PC-3 (cell line): ENCODE measurements at regions of chrX and their contacts with region 1.

Region 1: GRCh38 chrX:141176586-141177451 is at the start of gene LDOC1:
- DNase-seq: peak; percentile 89
- ATAC-seq: peak; percentile 79
- H3K4me3 ChIP-seq: peak within 1 kb of the TSS; percentile 99
- H3K27ac ChIP-seq: peak within 1 kb of the TSS; percentile 40
- H3K4me1 ChIP-seq: peaks cover 14% of the 10 kb centered on the region; the same call in 1 of the 2 replicates
- H3K27me3 ChIP-seq: no peaks in the 10 kb centered on the region
- CTCF ChIP-seq: no peak
- total RNA-seq, gene LDOC1: 40.6 and 45.5 TPM in 2 replicates

Region 2: GRCh38 chrX:141320801-141321200 is 144.0 kb after region 1 on chrX:
- CTCF ChIA-PET with region 1: no interaction called
- POLR2A ChIA-PET with region 1: no interaction called
- intact Hi-C with region 1: loop called (anchors 10 kb)
- DNase-seq: peak; percentile 39
- ATAC-seq: no peak
- H3K4me3 ChIP-seq: no peak overlapping the region
- H3K27ac ChIP-seq: no peak overlapping the region; the same call in 1 of the 2 replicates
- H3K4me1 ChIP-seq: peaks cover 14% of the 10 kb centered on the region
- H3K27me3 ChIP-seq: no peaks in the 10 kb centered on the region
- CTCF ChIP-seq: no peak

Region 3: DNA sequence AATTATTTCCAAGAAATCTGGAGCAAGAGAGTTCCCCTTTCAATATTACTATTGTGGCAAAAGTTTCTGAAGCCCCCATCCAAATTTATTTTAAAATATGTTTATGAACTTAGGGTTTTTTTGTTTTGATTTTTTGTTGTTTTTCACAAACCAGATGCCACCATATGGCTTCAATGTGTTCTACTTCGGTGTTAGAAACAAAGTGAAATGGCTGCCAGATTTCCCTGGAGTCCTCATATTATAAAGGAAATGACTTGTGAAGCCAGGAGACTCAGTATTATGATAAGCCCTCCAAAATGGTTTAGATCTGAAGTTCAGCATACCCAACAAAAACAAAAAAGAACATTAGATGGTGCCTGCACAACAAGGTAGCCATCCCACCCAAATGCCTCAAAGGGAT is 219.7 kb after region 1 on chrX:
- CTCF ChIA-PET with region 1: no interaction called
- POLR2A ChIA-PET with region 1: no interaction called
- intact Hi-C with region 1: no loop called
- DNase-seq: no peak
- ATAC-seq: no peak
- H3K4me3 ChIP-seq: no peak overlapping the region
- H3K27ac ChIP-seq: no peak overlapping the region
- H3K4me1 ChIP-seq: no peaks in the 10 kb centered on the region
- H3K27me3 ChIP-seq: no peaks in the 10 kb centered on the region
- CTCF ChIP-seq: no peak